Activated T-helper 1 cell treated with anti-CD3 and anti-CD28 coated beads, Interleukin-12 subunit alpha, Interleukin-12 subunit beta, Interleukin-2, Interleukin-4 antibody, amounts not matched to agents 30 ng/mL and 10 ng/mL and 1 ng/mL, durations not matched to agents 14 hours and 24 hours and 36 hours (primary cell): ENCODE measurements at regions of chr6 and their contacts with region 1.

Region 1: DNA sequence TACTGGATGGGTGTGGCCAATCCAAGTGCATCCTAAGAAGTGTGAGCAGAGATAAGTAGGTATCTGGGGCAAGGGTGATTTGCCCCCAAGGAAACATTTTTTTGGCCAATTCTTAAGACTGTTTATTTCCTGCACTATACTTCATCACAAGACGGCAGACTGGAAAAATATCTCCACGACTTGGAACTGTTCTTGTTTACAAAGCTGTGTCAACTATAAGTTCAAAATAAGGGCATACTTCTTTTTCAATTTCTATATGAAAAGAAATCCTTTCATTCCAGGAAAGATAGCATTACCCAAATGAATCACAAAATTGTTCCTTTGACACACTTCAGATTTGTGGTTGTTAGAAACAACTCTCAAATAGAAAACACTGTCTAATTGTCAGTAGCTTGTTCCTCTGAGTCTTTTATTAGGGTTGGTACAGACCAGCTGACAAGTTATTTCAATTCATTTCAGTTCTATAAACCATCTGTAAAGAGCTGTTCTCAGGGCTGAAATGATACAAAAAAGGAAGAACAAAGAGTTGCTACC is 212.9 kb upstream of the PRDM1 start:
- DNase-seq: no peak
- H3K4me3 Mint-ChIP-seq: no peak overlapping the region
- H3K27ac Mint-ChIP-seq: no peak overlapping the region
- H3K4me1 Mint-ChIP-seq: peaks cover 15% of the 10 kb centered on the region
- H3K27me3 Mint-ChIP-seq: peaks cover 14% of the 10 kb centered on the region

Region 2: GRCh38 chr6:105691081-105691480 is 182.2 kb before region 1 on chr6:
- intact Hi-C with region 1: no loop called
- DNase-seq: no peak
- H3K4me3 Mint-ChIP-seq: no peak overlapping the region
- H3K27ac Mint-ChIP-seq: peak overlapping the region; percentile 21
- H3K4me1 Mint-ChIP-seq: peaks cover 22% of the 10 kb centered on the region
- H3K27me3 Mint-ChIP-seq: peaks cover 8% of the 10 kb centered on the region

Region 3: GRCh38 chr6:105981002-105981887 is 108.0 kb after region 1 on chr6:
- intact Hi-C with region 1: loop called (anchors 1 kb)
- DNase-seq: peak; percentile 48
- H3K4me3 Mint-ChIP-seq: peak overlapping the region; percentile 84
- H3K27ac Mint-ChIP-seq: peak overlapping the region; percentile 91
- H3K4me1 Mint-ChIP-seq: peaks cover 79% of the 10 kb centered on the region
- H3K27me3 Mint-ChIP-seq: no peaks in the 10 kb centered on the region

Region 4: DNA sequence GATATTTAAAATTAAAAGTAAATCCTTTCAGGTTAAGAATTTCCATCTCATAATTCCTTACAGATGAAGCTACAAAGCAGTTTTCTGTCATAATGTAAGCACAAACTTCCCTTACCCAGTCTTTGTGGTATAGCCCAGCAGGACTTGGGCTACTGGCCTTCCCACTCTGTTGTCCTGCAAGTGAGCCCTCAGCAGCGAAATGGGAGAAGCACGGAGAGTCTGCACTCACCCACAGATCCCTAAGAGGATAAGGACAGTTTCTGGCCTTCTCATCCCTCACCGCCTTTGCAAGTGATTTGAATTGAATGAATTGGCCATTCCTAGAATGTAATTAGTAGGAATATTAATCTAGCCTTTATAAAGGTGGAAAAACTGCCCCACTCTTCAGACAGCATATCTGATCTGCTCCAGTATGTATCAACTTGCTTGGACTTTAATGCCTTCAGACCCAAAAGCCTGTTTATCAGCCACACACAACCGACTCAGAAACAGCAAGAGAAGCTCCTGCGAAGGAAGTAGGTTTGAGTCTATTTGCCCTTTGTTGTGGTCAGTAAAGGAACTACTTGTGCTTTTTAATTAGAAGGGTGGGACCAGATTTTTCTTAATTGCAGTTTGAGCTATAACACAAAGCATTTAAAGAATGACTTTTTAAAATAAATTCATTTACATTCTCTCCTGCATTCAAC is 183.0 kb after region 1 on chr6:
- intact Hi-C with region 1: no loop called
- DNase-seq: no peak
- H3K4me3 Mint-ChIP-seq: no peak overlapping the region
- H3K27ac Mint-ChIP-seq: no peak overlapping the region
- H3K4me1 Mint-ChIP-seq: peaks cover 18% of the 10 kb centered on the region
- H3K27me3 Mint-ChIP-seq: no peaks in the 10 kb centered on the region